A549 (cell line): ENCODE measurements at regions of chr3 and their contacts with region 1.

Region 1: DNA sequence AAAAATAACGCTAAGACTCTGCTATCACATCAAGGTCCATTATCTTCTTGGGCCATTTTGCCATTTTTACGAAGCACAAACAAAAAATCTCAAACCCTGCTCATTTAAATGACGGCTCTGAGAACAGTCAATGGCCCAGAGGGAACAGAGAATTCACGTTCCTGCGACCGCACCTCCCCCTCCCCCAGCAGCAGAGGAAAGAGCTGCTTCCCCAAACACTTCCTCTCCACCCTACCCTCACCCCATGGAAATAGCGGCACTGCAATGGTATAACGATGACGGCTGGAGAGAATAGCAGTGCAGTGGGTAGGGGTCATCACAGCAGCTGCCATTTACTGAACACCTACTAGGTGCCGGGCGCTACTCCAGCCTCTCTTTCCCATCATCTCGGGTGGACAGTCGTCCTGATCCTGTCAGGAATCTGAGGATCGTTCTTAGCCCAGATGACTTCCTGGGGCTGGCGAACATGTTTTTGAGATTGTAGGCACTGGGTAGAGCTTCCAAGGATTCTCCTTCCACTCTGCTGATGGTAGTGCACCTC is 113.3 kb downstream of the IQSEC1 start:
- DNase-seq: no peak
- ATAC-seq: no peak
- H3K4me3 ChIP-seq: no peak overlapping the region
- H3K27ac ChIP-seq: no peak overlapping the region
- H3K4me1 ChIP-seq: peaks cover 9% of the 10 kb centered on the region; the same call in 2 of the 3 replicates
- CTCF ChIP-seq: no peak
- EP300 ChIP-seq: no peak
- POLR2A ChIP-seq: no peak
- RAD21 ChIP-seq: no peak

Region 2: GRCh38 chr3:12840591-12841148 is 119.2 kb before region 1 on chr3:
- CTCF ChIA-PET with region 1: no interaction called
- POLR2A ChIA-PET with region 1: no interaction called
- DNase-seq: no peak
- ATAC-seq: peak; percentile 35 to 52; a peak in 3 of 6 replicates
- H3K4me3 ChIP-seq: peak overlapping the region; percentile 98
- H3K27ac ChIP-seq: peak overlapping the region; percentile 95 to 97
- H3K4me1 ChIP-seq: peaks cover 33% of the 10 kb centered on the region
- CTCF ChIP-seq: no peak
- EP300 ChIP-seq: no peak
- POLR2A ChIP-seq: no peak
- RAD21 ChIP-seq: no peak

Region 3: DNA sequence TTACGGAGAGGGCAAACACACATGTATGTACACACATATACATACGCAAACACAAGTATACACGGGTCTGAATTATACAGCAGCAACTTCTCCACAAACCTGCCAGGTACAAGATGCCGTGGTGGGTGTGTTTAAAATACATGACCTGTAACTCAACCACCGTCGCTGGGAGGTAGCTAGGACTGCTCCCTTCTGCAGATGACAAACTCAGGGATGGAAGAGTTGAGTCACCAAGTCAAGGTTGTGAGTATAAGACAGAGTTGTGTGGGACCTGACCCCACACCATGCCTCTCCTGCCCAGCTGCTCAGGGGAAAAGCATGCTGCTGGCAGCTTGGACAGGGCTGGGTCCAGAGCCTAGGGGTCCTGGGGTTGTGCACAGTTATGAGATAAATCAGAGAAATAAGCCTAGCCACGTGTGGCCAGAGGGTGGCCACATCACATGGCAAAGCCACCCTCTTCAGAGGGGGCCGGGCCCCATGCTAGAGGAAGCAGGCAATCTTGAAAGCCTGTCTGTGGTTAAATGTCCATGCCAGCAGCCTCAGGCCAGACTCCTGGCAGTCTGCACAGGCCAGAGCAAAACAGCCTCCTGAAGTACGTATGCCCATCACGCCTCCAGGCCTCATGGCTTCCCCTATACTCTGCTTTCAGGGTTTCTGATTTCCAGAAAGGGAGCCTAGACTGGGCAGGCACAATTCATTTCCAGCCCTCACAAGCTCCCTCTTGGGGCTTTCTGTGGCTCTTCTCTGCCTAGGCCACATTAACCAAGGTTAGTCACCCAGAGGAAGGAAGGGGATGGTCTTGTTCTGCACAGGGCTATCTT is 10.8 kb before region 1 on chr3:
- CTCF ChIA-PET with region 1: interaction called, 12 read pairs
- POLR2A ChIA-PET with region 1: no interaction called
- DNase-seq: no peak
- ATAC-seq: peak; percentile 4 to 16; a peak in 2 of 6 replicates
- H3K4me3 ChIP-seq: no peak overlapping the region
- H3K27ac ChIP-seq: no peak overlapping the region
- H3K4me1 ChIP-seq: peaks cover 7% of the 10 kb centered on the region; the same call in 2 of the 3 replicates
- CTCF ChIP-seq: no peak
- EP300 ChIP-seq: no peak
- POLR2A ChIP-seq: no peak
- RAD21 ChIP-seq: no peak